ENCODE measurements at regions of chr1 and their contacts with region 1.

Region 1: DNA sequence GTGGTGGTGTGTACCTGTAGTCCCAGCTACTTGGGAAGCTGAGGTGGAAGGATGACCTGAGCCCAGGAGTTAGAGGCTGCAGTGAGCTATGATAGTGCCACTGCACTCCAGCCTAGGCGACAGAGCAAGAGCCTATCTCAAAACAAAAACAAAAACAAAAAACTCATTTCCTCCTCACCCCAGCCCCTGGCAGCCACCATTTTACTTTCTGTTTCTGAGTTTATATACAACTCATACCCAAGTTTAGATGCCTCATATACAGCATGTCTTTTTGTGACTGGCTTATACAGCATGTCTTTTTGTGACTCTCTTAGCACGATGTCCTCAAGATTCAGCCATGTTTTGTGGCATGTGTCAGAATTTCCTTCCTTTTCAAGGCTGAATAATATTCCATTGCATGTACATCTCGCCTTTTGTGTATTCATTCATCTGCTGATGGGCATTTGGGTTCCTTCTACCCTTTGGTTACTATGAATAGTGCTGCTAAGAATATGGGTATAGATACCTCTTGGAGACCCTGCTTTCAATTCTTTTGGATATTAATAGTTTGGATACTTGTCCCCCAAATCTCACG is 14.7 kb downstream of the COA7 start:
- DNase-seq: no peak
- ATAC-seq: no peak
- H3K4me3 Mint-ChIP-seq: no peak overlapping the region
- H3K27ac Mint-ChIP-seq: no peak overlapping the region
- H3K4me1 Mint-ChIP-seq: peaks cover 8% of the 10 kb centered on the region
- H3K27me3 Mint-ChIP-seq: no peaks in the 10 kb centered on the region
- CTCF ChIP-seq: no peak

Region 2: DNA sequence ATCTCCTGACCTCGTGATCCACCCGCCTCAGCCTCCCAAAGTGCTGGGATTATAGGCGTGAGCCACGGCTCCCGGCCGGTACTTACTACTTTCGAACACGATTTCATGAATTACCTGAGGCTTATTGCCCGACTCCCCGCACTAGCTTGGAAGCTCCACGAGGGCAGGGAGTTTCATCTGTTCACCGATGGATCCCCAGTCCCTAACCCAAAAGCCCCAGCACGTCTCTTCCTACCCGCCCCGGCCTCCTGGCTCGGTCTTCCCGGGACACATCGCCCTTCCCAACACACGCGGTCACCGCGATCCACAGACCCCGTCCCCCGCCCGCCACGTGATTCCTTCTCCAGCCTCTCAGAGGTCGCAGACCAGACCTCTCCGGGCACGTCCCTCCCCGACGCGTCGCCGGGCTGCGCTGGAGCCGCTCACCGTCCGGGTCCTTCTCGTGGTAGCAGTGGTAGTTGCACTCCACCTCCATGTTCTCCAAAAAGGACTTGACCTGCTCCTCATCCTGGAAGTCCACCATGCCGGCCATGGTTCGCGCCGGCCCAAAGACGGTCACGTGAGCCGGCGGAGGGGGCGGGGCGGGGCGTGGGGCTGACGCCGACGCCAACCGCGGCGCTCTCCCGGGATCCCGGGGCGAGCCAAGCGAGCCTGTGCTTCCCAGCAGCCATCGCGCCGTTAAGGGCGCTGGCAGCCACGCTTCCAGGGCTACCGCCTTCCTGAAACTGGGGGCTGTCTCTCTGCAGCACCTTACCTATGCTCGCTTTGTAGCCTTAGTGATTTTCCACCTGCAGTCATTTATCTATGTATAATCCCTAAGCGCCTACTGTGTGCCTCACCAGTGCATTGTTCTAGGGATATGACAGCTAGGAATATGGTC is 14.6 kb after region 1 on chr1 and contains the start of gene COA7:
- CTCF ChIA-PET with region 1: interaction called, 11 read pairs
- POLR2A ChIA-PET with region 1: interaction called, 4 read pairs
- intact Hi-C with region 1: no loop called
- DNase-seq: peak; percentile 70
- ATAC-seq: peak; percentile 43
- H3K4me3 Mint-ChIP-seq: peak within 1 kb of the TSS; percentile 83
- H3K27ac Mint-ChIP-seq: peak within 1 kb of the TSS; percentile 88
- H3K4me1 Mint-ChIP-seq: peaks cover 29% of the 10 kb centered on the region
- H3K27me3 Mint-ChIP-seq: no peaks in the 10 kb centered on the region
- CTCF ChIP-seq: no peak
- total RNA-seq, gene COA7: 16.3 to 17.6 TPM

Region 3: GRCh38 chr1:53303726-53304515 is 620.5 kb after region 1 on chr1:
- CTCF ChIA-PET with region 1: no interaction called
- POLR2A ChIA-PET with region 1: no interaction called
- intact Hi-C with region 1: no loop called
- DNase-seq: no peak
- ATAC-seq: no peak
- H3K4me3 Mint-ChIP-seq: no peak overlapping the region
- H3K27ac Mint-ChIP-seq: no peak overlapping the region
- H3K4me1 Mint-ChIP-seq: peaks cover 15% of the 10 kb centered on the region
- H3K27me3 Mint-ChIP-seq: no peaks in the 10 kb centered on the region
- CTCF ChIP-seq: no peak